ENCODE measurements at regions of chr2 and their contacts with region 1.

Region 1: GRCh38 chr2:240232961-240233893 is 92.8 kb upstream of the OTOS start:
- DNase-seq: peak; percentile 86 to 88
- ATAC-seq: peak; percentile 72 to 85 (median 77)
- H3K4me3 ChIP-seq: peak overlapping the region in 6 of 10 donors; percentile 24 to 41 (median 34)
- H3K27ac ChIP-seq: peak overlapping the region in 8 of 10 donors; percentile 36 to 81 (median 58)
- H3K4me1 ChIP-seq: peaks cover 0 to 48% (median 21%) of the 10 kb centered on the region in 9 donors
- H3K27me3 ChIP-seq: peaks cover 0 to 7% (median 0%) of the 10 kb centered on the region in 7 donors
- CTCF ChIP-seq: peak; percentile 79 to 94 (median 87)

Region 2: DNA sequence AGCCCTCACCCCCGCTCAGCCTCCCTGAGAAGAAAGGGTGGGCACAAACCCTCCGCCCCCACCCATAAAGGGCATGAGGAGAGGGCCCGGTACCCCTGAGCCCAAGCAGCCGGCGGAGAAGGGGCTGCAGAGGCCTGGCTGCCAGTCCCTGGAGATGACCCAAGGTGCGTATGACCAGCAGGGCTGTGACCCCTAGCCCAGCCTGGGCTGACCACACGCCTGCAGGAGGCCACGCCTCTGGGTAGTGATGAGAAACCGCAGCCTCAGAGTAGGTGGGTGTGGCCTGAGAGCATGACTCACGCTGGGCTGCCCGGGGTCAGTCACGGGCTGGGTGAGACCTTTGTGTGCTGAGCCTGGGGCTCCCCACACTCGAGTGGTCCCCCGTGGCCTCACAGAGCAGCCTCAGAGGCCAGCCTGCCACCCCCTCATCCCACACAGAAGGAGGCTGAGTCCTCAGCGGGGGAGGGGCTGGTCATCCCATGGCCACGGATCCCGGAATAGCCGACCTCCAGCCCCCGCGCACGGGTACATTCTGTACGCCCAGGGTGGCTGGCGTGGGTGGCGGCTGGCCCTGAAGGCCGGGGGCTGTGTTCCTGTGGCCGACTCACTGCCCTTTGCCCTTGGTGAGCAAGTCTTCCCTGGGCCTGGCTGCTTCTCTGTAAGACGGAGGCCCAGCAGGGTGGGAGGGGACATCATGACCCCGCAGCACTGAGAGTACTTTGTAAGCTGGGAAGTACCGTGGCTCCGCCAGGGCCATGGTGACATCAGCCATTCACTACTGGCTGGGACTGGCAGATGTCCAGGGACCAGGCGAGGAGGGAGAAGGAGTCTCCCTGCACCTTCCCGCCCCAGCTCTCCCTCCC is 18.0 kb after region 1 on chr2:
- intact Hi-C with region 1: loop called in 2 of 10 experiments (anchors 1 kb)
- DNase-seq: peak; percentile 89 to 90
- ATAC-seq: peak; percentile 88 to 93 (median 89)
- H3K4me3 ChIP-seq: peak overlapping the region in 5 of 10 donors; percentile 8 to 34 (median 29)
- H3K27ac ChIP-seq: peak overlapping the region; percentile 82 to 93 (median 91)
- H3K4me1 ChIP-seq: peaks cover 19 to 55% (median 28%) of the 10 kb centered on the region in 9 donors
- H3K27me3 ChIP-seq: no peaks in the 10 kb centered on the region
- CTCF ChIP-seq: no peak

Region 3: GRCh38 chr2:240293557-240294461 is 60.6 kb after region 1 on chr2:
- intact Hi-C with region 1: loop called in 7 of 10 experiments (anchors 1 to 5 kb)
- DNase-seq: peak; percentile 56 to 62
- ATAC-seq: peak; percentile 39 to 79 (median 52)
- H3K4me3 ChIP-seq: no peak overlapping the region
- H3K27ac ChIP-seq: peak overlapping the region in 9 of 10 donors; percentile 40 to 85 (median 74)
- H3K4me1 ChIP-seq: peaks cover 3 to 55% (median 18%) of the 10 kb centered on the region in 9 donors
- H3K27me3 ChIP-seq: no peaks in the 10 kb centered on the region
- CTCF ChIP-seq: no peak

Region 4: DNA sequence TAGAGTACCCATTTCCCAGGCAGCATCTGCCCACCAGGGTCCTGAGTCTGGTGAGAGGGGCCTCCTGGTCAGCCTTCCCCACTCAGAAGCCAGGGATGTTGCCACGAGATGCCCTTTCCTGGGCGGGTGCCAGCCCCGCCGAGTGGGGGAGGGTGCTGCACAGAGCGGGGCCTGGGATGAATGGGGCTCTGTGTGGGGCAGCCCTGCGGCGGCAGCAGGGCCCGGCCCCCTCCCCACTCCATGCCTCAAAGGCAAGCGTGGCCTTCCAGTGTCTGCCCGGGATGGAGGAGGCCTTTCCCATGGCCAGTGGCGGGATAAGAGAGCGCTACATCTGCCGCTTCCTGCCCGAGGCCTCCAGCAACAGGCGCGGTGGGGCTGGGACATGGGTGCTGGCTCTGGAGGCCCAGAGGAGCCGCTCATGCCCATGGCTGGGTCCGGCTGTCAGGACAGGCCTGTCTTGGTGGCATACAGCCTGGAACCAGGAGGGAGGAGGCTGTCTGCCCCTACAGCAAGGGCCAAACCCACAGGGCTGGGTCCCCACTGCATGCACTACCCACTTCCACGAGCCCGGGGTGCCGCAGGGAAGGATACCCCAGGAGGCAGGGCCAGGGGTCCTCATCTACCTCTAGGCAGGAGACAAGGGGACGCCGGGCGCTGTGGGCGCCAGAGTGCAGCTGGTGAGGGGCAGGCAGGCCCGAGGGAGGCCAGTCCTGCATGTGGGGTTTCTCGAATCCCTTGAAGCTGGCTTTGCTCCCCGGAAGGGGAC is 107.0 kb after region 1 on chr2:
- intact Hi-C with region 1: loop called in 3 of 10 experiments (anchors 5 to 10 kb)
- DNase-seq: no peak
- ATAC-seq: peak in 3 of 8 donors; percentile 28 to 56 (median 33)
- H3K4me3 ChIP-seq: no peak overlapping the region
- H3K27ac ChIP-seq: no peak overlapping the region
- H3K4me1 ChIP-seq: no peaks in the 10 kb centered on the region
- H3K27me3 ChIP-seq: peaks cover 0 to 5% (median 0%) of the 10 kb centered on the region in 7 donors
- CTCF ChIP-seq: no peak

Region 5: GRCh38 chr2:240355001-240355976 is 122.1 kb after region 1 on chr2:
- intact Hi-C with region 1: loop called in 1 of 10 experiments (anchors 10 kb)
- DNase-seq: no peak
- ATAC-seq: no peak
- H3K4me3 ChIP-seq: no peak overlapping the region
- H3K27ac ChIP-seq: no peak overlapping the region
- H3K4me1 ChIP-seq: peaks cover 0 to 29% (median 3%) of the 10 kb centered on the region in 9 donors
- H3K27me3 ChIP-seq: peaks cover 0 to 2% (median 0%) of the 10 kb centered on the region in 7 donors
- CTCF ChIP-seq: no peak

Region 6: DNA sequence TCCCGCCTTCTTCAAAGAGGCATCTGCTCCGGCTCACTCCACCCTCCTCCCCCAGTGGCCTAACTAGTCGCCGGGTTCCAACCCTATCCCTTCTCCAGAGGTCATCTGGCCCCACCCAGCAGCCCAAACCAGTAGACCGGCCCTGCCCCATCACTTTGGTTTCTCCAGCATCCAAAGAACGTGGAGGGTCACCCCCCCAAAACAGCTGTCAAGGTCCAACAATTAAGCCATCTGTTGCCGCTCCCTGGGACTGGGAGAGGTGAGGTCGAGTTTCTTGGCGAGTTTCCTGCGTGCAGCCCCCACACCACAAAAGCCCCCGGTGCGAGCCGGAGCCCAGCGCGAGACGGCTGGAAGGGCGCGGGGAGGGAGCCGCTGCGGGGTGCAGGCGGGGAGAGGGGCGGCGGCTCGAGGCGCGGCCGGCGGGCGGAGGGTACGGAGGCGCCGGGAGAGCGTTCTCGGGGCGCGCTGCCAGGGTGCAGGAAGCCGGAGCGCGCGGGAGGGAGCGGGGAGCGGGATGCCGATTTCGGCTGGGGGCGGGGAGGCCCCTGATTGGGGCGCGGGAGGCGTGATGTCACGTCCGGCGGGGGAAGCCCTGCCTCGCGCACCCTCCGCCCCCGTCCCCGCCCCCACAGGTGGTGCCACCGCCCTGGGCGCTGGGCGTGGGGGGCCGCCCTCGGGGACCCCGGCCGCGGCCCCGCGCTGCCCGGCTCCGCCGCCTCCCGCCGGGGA is 201.7 kb after region 1 on chr2:
- intact Hi-C with region 1: loop called (anchors 1 to 2 kb)
- DNase-seq: peak; percentile 93 to 95
- ATAC-seq: peak; percentile 64 to 87 (median 81)
- H3K4me3 ChIP-seq: peak overlapping the region; percentile 16 to 84 (median 68)
- H3K27ac ChIP-seq: peak overlapping the region; percentile 69 to 97 (median 93)
- H3K4me1 ChIP-seq: peaks cover 9 to 45% (median 34%) of the 10 kb centered on the region in 9 donors
- H3K27me3 ChIP-seq: peaks cover 0 to 53% (median 27%) of the 10 kb centered on the region in 7 donors
- CTCF ChIP-seq: no peak